PC-9 (cell line): ENCODE measurements at regions of chr12 and their contacts with region 1.

Region 1: GRCh38 chr12:88299567-88300101 is 157.5 kb downstream of the TMTC3 start:
- DNase-seq: peak; percentile 71 to 87
- H3K4me3 ChIP-seq: 0 out of 2 replicates have a peak overlapping the region, but pooled peaks have one; percentile 11
- H3K27ac ChIP-seq: peak overlapping the region; percentile 98
- H3K4me1 ChIP-seq: peaks cover 37% of the 10 kb centered on the region
- H3K27me3 ChIP-seq: no peaks in the 10 kb centered on the region
- CTCF ChIP-seq: no peak

Region 2: DNA sequence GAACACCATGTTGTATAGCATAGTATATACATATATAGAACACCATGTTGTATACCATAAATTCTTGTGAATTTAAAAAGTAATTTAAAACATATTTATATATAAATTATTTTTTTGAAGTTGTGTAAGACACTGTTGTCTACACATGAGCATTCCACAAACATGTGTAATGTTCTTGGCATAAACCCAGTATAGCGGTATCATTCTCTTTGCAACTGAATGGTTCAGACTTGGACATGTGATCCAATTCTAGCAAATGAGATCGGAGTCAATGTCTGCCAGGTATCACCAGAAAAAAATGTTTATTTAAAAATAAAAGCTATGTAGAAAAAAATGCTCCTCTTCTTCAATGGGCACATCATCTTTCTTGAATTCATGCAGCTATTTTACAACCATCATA is 191.6 kb before region 1 on chr12:
- CTCF ChIA-PET with region 1: no interaction called
- POLR2A ChIA-PET with region 1: no interaction called
- intact Hi-C with region 1: no loop called
- DNase-seq: no peak
- H3K4me3 ChIP-seq: no peak overlapping the region
- H3K27ac ChIP-seq: no peak overlapping the region
- H3K4me1 ChIP-seq: no peaks in the 10 kb centered on the region
- H3K27me3 ChIP-seq: no peaks in the 10 kb centered on the region
- CTCF ChIP-seq: no peak

Region 3: GRCh38 chr12:88153959-88154358 is 145.7 kb before region 1 on chr12:
- CTCF ChIA-PET with region 1: no interaction called
- POLR2A ChIA-PET with region 1: no interaction called
- intact Hi-C with region 1: loop called (anchors 1 kb)
- DNase-seq: no peak
- H3K4me3 ChIP-seq: no peak overlapping the region
- H3K27ac ChIP-seq: no peak overlapping the region
- H3K4me1 ChIP-seq: no peaks in the 10 kb centered on the region
- H3K27me3 ChIP-seq: no peaks in the 10 kb centered on the region
- CTCF ChIP-seq: peak; percentile 69

Region 4: GRCh38 chr12:88325076-88325815 is 25.6 kb after region 1 on chr12:
- CTCF ChIA-PET with region 1: interaction called, 3 read pairs
- POLR2A ChIA-PET with region 1: interaction called, 10 read pairs
- intact Hi-C with region 1: loop called (anchors 5 kb)
- DNase-seq: peak; percentile 6 to 58
- H3K4me3 ChIP-seq: no peak overlapping the region
- H3K27ac ChIP-seq: peak overlapping the region; percentile 48
- H3K4me1 ChIP-seq: peaks cover 18% of the 10 kb centered on the region
- H3K27me3 ChIP-seq: no peaks in the 10 kb centered on the region
- CTCF ChIP-seq: no peak

Region 5: GRCh38 chr12:88371416-88372183 is 72.0 kb after region 1 on chr12:
- CTCF ChIA-PET with region 1: no interaction called
- POLR2A ChIA-PET with region 1: no interaction called
- intact Hi-C with region 1: loop called (anchors 10 kb)
- DNase-seq: no peak
- H3K4me3 ChIP-seq: no peak overlapping the region
- H3K27ac ChIP-seq: no peak overlapping the region
- H3K4me1 ChIP-seq: no peaks in the 10 kb centered on the region
- H3K27me3 ChIP-seq: no peaks in the 10 kb centered on the region
- CTCF ChIP-seq: no peak

Region 6: DNA sequence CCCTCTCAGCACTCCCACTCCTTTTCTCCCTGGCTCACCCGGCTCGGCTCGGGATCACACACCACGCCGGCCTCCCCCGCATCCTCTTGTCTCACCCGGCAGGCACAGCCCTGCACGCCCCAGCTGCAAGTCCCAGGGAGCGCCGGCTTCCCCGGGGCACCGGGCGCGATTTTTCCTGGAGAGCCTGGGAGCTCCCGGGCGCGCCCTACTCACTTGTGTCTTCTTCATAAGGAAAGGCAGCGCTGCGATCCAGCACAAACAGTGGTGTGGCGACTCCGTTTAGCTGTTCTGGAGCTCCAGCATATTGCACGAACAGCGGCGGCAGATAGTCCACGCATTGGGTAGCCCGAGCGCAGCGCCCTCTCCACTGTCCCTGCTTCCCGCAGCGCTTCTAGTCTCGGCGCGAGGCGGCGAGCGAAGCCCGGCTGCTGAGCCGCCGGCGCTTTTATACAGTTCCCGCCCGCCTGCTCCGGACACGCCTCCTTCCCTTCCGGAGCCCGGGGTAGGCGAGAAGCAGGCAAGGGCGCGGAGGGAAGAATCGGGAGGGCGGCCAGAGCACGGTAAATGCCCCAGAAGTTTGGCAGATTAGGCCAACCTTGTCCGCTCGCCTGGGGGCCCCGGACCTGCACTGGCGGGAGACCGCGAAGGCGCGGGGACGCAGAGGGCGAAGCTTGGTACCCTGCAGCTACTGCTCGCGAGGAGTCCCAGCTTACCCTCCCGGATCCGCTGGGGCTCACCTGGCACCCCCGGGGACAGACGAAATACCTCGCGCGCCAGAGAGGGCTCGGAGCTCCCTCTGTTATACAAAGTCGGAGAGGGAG is 280.6 kb after region 1 on chr12 and contains the start of gene KITLG:
- CTCF ChIA-PET with region 1: interaction called, 4 read pairs
- POLR2A ChIA-PET with region 1: interaction called, 6 read pairs
- intact Hi-C with region 1: loop called (anchors 2 kb)
- DNase-seq: peak; percentile 52 to 89
- H3K4me3 ChIP-seq: peak within 1 kb of the TSS; percentile 67
- H3K27ac ChIP-seq: no peak within 1 kb of the TSS
- H3K4me1 ChIP-seq: peaks cover 13% of the 10 kb centered on the region
- H3K27me3 ChIP-seq: no peaks in the 10 kb centered on the region
- CTCF ChIP-seq: no peak
- total RNA-seq, gene KITLG: 15.8 and 17.4 TPM in 2 replicates